GM12878 (cell line): ENCODE measurements at regions of chr20 and their contacts with region 1.

Region 1: GRCh38 chr20:35207950-35208611 is 18.4 kb upstream of the MMP24 start:
- DNase-seq: peak; percentile 20
- ATAC-seq: peak; percentile 97
- H3K4me3 ChIP-seq: no peak overlapping the region
- H3K27ac ChIP-seq: no peak overlapping the region
- H3K4me1 ChIP-seq: no peaks in the 10 kb centered on the region
- H3K27me3 ChIP-seq: no peaks in the 10 kb centered on the region
- CTCF ChIP-seq: peak; percentile 66 to 89 (median 71)
- EP300 ChIP-seq: no peak
- POLR2A ChIP-seq: no peak
- RAD21 ChIP-seq: peak; percentile 94

Region 2: GRCh38 chr20:34806255-34806654 is 401.8 kb before region 1 on chr20:
- CTCF ChIA-PET with region 1: no interaction called
- POLR2A ChIA-PET with region 1: no interaction called
- RAD21 ChIA-PET with region 1: no interaction called
- SMC1A ChIA-PET with region 1: no interaction called
- in situ Hi-C with region 1: no loop called
- intact Hi-C with region 1: no loop called
- DNase-seq: no peak
- ATAC-seq: no peak
- H3K4me3 ChIP-seq: no peak overlapping the region
- H3K27ac ChIP-seq: no peak overlapping the region
- H3K4me1 ChIP-seq: peaks cover 4% of the 10 kb centered on the region; the same call in 1 of the 2 replicates
- H3K27me3 ChIP-seq: no peaks in the 10 kb centered on the region
- CTCF ChIP-seq: no peak
- EP300 ChIP-seq: no peak
- POLR2A ChIP-seq: no peak
- RAD21 ChIP-seq: no peak

Region 3: DNA sequence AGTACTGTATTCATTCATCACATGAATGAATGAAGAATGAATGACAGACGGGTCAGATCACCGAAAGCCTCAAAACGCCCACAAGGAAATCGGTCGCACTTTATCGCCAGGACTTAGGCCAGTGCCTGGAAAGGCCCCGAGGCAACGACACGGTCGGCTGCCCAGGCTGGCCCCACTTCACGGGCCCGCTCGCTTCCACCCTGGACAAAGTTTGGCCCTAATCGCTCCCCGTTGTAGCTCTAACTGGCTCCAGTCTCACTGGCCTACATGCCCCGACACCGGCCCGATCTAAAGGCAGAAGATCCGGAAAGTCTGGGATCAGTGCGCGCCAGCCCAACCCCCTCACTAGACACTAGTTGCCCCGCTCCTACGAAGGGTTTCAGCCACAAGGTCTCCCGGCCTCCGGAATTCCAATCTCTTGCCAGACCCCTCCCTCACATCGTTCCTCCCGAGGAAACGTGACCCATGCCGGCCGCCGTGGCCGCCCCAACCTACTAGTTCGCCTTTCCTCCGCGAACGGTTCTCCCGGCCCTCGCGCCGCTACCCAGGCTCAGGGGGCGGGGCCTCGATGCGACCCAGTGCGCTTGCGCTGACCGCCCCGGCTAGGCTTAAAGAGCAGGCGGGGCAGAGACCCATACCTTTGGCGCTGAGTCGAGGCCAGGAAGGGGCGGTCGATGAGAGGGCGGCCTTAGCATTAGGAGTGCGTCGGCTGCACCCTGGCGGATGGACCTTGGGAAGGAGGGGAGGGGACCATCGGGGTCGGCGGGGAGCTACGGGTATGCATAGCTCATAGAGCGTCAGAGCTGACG is 252.6 kb before region 1 on chr20 and contains the starts of genes GSS and MYH7B:
- CTCF ChIA-PET with region 1: no interaction called
- POLR2A ChIA-PET with region 1: no interaction called
- RAD21 ChIA-PET with region 1: no interaction called
- SMC1A ChIA-PET with region 1: no interaction called
- in situ Hi-C with region 1: no loop called
- intact Hi-C with region 1: loop called (anchors 5 kb)
- DNase-seq: peak; percentile 72
- ATAC-seq: peak; percentile 95
- H3K4me3 ChIP-seq: peak within 1 kb of the TSS; percentile 86
- H3K27ac ChIP-seq: peak within 1 kb of the TSS; percentile 74
- H3K4me1 ChIP-seq: peaks cover 8% of the 10 kb centered on the region
- H3K27me3 ChIP-seq: no peaks in the 10 kb centered on the region
- CTCF ChIP-seq: peak; percentile 18 to 44 (median 42); a peak in 5 of 6 replicates
- EP300 ChIP-seq: no peak
- POLR2A ChIP-seq: peak; percentile 97
- RAD21 ChIP-seq: peak; percentile 62
- polyA plus RNA-seq, gene GSS: 12.7 to 39.5 TPM
- polyA plus RNA-seq, gene MYH7B: not detected

Region 4: GRCh38 chr20:35318502-35319157 is 110.5 kb after region 1 on chr20:
- CTCF ChIA-PET with region 1: no interaction called
- POLR2A ChIA-PET with region 1: no interaction called
- RAD21 ChIA-PET with region 1: no interaction called
- SMC1A ChIA-PET with region 1: no interaction called
- in situ Hi-C with region 1: no loop called
- intact Hi-C with region 1: no loop called
- DNase-seq: no peak
- ATAC-seq: no peak
- H3K4me3 ChIP-seq: no peak overlapping the region
- H3K27ac ChIP-seq: no peak overlapping the region
- H3K4me1 ChIP-seq: no peaks in the 10 kb centered on the region
- H3K27me3 ChIP-seq: no peaks in the 10 kb centered on the region
- CTCF ChIP-seq: no peak
- EP300 ChIP-seq: no peak
- POLR2A ChIP-seq: no peak
- RAD21 ChIP-seq: no peak

Region 5: DNA sequence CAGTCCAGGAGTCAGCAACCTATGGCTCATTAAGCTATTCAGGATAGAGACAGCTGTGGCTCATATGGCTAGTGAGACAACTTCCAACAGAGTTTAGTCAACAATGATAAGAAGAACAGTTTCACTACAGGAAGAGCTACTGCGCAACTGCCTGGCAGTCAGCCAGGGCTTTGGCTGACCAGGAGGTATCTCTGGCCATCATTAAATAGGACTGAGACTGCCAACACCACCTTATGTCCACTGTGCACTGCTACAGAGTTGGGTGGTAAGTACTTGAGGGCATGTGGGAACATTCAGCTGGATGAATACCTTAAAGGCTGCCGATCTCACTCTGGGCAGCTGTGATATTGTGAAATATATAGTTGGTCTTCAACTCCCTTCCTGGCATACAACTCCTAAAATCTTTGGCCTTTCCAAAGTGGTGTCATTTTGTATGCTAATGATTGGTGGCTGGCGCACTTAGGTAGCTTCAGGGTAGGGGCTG is 136.3 kb after region 1 on chr20:
- CTCF ChIA-PET with region 1: no interaction called
- POLR2A ChIA-PET with region 1: no interaction called
- RAD21 ChIA-PET with region 1: no interaction called
- SMC1A ChIA-PET with region 1: no interaction called
- in situ Hi-C with region 1: no loop called
- intact Hi-C with region 1: no loop called
- DNase-seq: no peak
- ATAC-seq: no peak
- H3K4me3 ChIP-seq: no peak overlapping the region
- H3K27ac ChIP-seq: no peak overlapping the region
- H3K4me1 ChIP-seq: no peaks in the 10 kb centered on the region
- H3K27me3 ChIP-seq: no peaks in the 10 kb centered on the region
- CTCF ChIP-seq: no peak
- EP300 ChIP-seq: no peak
- POLR2A ChIP-seq: no peak
- RAD21 ChIP-seq: no peak